Mammary epithelial cell (primary cell): ENCODE measurements at regions of chr16 and their contacts with region 1.

Region 1: DNA sequence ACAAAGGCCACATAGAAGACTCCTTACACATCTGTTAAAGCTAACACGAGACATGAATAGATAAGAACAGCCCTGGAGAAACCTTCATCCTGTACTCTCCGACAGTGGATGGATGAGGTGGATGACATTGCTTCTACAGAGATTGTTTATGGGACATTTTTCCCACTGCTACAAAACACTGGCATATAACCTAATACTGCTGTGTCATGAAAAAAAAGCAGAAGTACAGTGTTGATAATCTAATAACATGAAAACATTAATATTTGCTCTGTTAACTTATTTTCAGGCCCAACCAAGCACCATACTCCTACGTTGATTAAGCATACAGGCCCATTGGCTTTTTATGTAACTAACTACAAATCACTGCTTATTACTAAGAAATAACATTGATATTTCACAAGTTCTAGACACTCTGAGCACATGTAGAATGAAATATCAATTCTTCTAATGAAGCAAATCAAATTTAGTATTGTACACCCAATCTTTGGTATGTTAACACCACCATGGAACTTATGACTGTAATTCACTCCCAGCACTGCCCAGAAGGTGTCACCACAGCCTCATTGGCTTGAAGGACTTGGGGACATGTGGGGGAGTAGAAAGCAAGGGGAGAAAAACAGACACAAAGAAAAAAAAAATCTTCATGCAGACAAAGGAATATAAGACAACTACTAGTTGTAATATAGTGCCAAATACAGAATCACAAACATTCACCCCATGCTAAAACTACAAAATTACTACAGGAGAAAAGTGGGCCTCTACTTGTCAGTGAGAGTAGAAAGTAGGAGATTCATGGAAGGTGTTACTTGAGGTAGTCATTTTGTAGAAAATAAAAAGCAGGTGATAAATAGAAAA is 330.0 kb upstream of the PMFBP1 start:
- DNase-seq: peak; percentile 39
- H3K4me3 ChIP-seq: no peak overlapping the region
- H3K27ac ChIP-seq: no peak overlapping the region
- H3K4me1 ChIP-seq: no peaks in the 10 kb centered on the region
- H3K27me3 ChIP-seq: no peaks in the 10 kb centered on the region
- CTCF ChIP-seq: peak; percentile 84 to 91

Region 2: DNA sequence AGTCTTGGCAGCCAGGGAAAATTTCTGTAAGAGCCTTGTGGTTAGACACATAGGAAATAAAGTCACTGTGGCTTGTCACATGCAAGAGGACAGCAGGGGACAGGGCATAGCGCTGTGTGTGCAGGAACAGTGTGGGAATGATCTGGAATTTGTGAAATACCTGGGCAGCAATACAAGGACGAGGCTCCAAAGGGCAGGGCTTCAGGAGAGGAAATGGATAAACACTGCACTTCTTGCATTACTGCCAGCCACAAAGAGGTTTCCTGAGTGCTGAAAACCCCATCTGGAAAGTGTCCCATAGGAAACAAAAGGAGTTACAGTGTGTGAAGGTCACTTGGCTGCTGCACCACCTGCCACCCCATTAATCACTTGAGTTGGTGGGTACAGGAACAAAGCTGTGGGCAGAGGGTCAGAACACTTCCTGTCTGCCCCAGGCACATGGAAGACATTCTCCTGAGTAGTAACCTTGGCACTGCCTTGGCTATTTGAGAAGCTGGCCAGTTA is 459.8 kb before region 1 on chr16:
- CTCF ChIA-PET with region 1: no interaction called
- dilution Hi-C with region 1: no loop called
- in situ Hi-C with region 1: no loop called
- intact Hi-C with region 1: no loop called
- DNase-seq: peak; percentile 2
- H3K4me3 ChIP-seq: no peak overlapping the region
- H3K27ac ChIP-seq: no peak overlapping the region
- H3K4me1 ChIP-seq: no peaks in the 10 kb centered on the region
- H3K27me3 ChIP-seq: no peaks in the 10 kb centered on the region
- CTCF ChIP-seq: no peak

Region 3: DNA sequence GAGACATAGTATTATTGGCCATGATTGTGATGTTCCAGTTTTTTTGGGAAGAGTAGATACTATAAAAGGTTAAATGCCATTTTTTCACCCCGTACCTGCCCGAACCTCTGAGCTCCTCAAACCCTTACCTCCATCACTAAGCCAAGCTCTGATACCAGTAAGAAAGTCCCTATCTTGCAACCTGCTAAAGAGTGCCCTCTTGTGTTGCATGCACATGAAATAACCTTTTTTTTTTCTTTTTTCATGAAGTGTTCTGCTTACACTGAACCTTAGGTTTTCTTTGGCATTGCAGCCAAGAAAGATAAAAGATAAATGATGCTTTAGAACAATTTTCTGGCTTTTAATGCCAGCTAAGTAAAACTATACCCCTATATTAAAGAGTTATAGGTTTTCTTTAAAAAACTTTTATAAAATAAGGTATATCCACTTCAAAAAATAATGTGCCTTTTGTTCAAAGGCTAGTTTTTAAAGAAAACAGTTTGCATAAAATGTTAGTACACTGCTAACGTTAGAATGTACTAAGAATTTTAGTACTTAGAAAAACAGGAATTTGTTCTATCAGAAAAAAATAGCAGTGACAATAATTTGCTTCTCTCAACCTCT is 34.7 kb before region 1 on chr16:
- CTCF ChIA-PET with region 1: no interaction called
- dilution Hi-C with region 1: no loop called
- in situ Hi-C with region 1: no loop called
- intact Hi-C with region 1: no loop called
- DNase-seq: peak; percentile 41
- H3K4me3 ChIP-seq: no peak overlapping the region
- H3K27ac ChIP-seq: no peak overlapping the region
- H3K4me1 ChIP-seq: no peaks in the 10 kb centered on the region
- H3K27me3 ChIP-seq: no peaks in the 10 kb centered on the region
- CTCF ChIP-seq: peak; percentile 68 to 81

Region 4: DNA sequence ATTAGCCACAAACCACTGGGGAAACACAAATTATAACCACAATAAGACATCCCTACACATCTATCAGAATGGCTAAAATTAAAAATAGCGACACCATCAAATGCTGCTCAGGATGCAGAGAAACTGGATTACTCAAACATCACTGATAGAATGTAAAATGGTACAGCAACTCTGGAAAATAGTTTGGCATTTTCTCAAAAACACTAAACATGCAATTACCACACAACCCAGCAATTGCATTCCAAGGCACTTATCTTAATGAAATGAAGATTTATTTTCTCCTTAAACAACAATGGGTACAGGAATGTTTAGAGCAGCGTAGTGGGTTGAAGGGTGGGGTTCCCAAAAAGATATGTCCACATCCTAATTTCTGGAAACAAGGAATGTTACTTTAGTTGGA is 21.1 kb before region 1 on chr16:
- CTCF ChIA-PET with region 1: interaction called, 22 read pairs
- dilution Hi-C with region 1: no loop called
- in situ Hi-C with region 1: no loop called
- intact Hi-C with region 1: no loop called
- DNase-seq: no peak
- H3K4me3 ChIP-seq: no peak overlapping the region
- H3K27ac ChIP-seq: no peak overlapping the region
- H3K4me1 ChIP-seq: no peaks in the 10 kb centered on the region
- H3K27me3 ChIP-seq: no peaks in the 10 kb centered on the region
- CTCF ChIP-seq: no peak

Region 5: DNA sequence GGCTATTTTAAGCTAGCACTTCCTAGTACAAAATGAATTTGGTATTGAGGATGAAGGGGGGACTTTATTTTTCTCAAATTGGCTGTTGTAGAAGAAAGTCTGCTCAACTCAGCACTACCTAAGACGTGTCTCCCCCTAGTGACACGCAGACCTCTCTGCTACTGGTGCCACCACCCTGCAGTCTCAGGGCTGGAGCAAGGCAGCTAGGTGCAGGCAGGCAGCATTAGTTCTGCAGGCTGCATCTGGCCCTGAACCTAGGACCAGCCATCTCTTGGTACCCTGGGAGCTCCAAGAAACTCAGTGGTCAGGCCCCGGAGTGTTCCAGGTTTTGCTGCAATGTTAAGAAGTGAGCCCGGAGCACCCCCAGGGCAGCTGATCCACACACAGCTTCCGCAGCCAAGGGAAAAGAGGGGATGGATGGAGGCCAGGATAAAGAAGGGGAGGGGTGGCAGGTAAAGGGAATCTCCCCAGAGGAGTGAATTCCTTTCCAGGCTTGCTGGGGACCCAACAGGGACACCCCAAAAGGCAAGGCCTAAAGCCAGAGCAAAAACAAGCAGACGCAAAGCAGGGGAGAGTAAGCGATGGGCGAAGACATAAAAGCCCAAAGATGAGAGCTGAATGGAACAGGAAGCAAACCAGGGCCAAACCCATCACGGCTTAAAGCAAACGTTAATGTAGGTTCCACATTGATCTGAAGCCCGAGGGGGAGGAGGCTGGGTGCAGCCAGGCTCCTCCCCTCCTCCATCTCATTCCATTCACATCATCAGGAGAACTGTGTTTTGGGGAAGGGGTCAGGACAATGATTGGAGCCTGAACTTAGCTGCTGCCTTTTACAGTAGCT is 345.4 kb after region 1 on chr16:
- CTCF ChIA-PET with region 1: no interaction called
- dilution Hi-C with region 1: no loop called
- in situ Hi-C with region 1: no loop called
- intact Hi-C with region 1: loop called (anchors 5 kb)
- DNase-seq: no peak
- H3K4me3 ChIP-seq: no peak overlapping the region
- H3K27ac ChIP-seq: no peak overlapping the region
- H3K4me1 ChIP-seq: peaks cover 13% of the 10 kb centered on the region
- H3K27me3 ChIP-seq: no peaks in the 10 kb centered on the region
- CTCF ChIP-seq: peak; percentile 36 to 53

Region 6: GRCh38 chr16:73196670-73197069 is 694.7 kb after region 1 on chr16:
- CTCF ChIA-PET with region 1: no interaction called
- dilution Hi-C with region 1: no loop called
- in situ Hi-C with region 1: loop called in 1 of 2 experiments (anchors 25 kb)
- intact Hi-C with region 1: loop called (anchors 1 kb)
- DNase-seq: peak; percentile 43
- H3K4me3 ChIP-seq: no peak overlapping the region
- H3K27ac ChIP-seq: no peak overlapping the region
- H3K4me1 ChIP-seq: no peaks in the 10 kb centered on the region
- H3K27me3 ChIP-seq: no peaks in the 10 kb centered on the region
- CTCF ChIP-seq: peak; percentile 81 to 87